ENCODE measurements at regions of chr5 and their contacts with region 1.

Region 1: DNA sequence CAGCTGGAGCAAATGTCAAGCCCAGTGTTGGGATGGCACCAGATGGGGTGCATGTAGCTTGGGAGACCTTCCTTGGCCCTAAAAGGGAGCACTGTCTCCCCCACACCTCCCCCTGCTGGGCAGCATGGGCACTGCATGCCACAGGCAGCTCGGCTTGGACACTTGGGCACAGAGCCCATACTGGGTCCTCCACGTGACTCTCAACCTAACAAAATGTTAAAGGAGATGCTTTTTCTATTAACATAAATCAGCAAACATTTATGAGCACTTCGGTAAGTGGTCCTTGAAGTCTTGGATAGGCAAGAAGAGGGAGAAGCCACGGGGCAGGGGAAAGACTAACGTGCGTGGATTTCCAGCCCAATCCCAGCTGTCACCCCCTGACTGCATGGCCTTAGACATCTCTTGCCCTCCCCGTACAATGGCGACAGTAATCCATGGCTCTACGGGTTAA is 23.9 kb upstream of the MAPK9 start:
- DNase-seq: peak; percentile 81
- ATAC-seq: peak; percentile 30
- H3K4me3 Mint-ChIP-seq: no peak overlapping the region
- H3K27ac Mint-ChIP-seq: no peak overlapping the region
- H3K4me1 Mint-ChIP-seq: peaks cover 3% of the 10 kb centered on the region
- H3K27me3 Mint-ChIP-seq: no peaks in the 10 kb centered on the region

Region 2: DNA sequence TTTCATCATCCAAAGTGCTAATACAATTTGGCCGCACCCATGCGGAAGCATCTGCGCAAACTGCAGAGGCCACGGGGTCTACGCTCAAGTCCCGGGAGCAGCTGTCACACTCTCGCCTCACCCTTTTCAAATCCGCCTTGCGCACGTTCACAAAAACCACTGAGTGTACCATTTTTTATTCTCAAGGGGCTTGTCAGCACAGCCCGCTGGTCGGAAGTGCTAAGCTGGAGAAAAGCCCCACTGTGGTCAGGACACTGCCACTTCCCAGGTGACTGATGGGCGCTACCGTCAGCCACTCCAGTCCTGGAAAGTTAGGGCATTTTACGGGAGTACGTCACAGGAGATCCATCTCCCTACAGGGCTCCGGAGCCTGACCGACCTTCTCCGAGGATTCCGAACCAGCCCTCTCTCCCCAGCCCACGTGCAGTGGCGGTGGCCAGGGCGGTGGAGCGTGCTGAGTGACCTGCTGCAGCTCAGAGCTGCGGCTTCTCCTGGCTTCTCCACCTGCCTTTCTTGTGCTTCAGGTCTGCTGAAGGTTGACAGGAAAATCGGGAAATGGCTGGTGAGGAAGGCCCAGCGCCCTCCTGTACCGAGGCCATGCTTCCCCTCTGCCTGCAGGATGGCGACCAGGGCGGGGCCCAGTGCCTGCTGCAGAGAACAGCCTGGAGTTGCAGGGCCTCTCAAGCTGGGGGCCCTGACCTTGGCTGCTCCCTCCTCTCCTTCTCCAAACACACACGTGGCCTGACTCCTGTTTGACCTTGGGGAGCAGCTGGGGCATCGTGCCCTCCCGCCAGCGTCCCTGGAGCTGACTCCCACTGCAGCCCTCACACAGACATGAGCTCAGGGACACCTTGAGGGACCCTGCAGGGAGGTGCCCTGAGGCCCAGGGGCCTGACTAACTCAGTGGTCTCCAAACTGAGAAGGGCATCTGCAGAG is 121.1 kb before region 1 on chr5:
- POLR2A ChIA-PET with region 1: no interaction called
- DNase-seq: no peak
- ATAC-seq: no peak
- H3K4me3 Mint-ChIP-seq: no peak overlapping the region
- H3K27ac Mint-ChIP-seq: no peak overlapping the region
- H3K4me1 Mint-ChIP-seq: no peaks in the 10 kb centered on the region
- H3K27me3 Mint-ChIP-seq: no peaks in the 10 kb centered on the region

Region 3: GRCh38 chr5:180291943-180292831 is 23.6 kb before region 1 on chr5 and contains the start of gene MAPK9:
- POLR2A ChIA-PET with region 1: interaction called, 10 read pairs
- DNase-seq: peak; percentile 91
- ATAC-seq: peak; percentile 79
- H3K4me3 Mint-ChIP-seq: peak within 1 kb of the TSS; percentile 94
- H3K27ac Mint-ChIP-seq: peak within 1 kb of the TSS; percentile 98
- H3K4me1 Mint-ChIP-seq: peaks cover 36% of the 10 kb centered on the region
- H3K27me3 Mint-ChIP-seq: no peaks in the 10 kb centered on the region
- total RNA-seq, gene MAPK9: 45.0 to 46.0 TPM

Region 4: GRCh38 chr5:180343831-180344327 is 28.1 kb after region 1 on chr5:
- POLR2A ChIA-PET with region 1: no interaction called
- DNase-seq: no peak
- ATAC-seq: no peak
- H3K4me3 Mint-ChIP-seq: no peak overlapping the region
- H3K27ac Mint-ChIP-seq: no peak overlapping the region
- H3K4me1 Mint-ChIP-seq: no peaks in the 10 kb centered on the region
- H3K27me3 Mint-ChIP-seq: peaks cover 14% of the 10 kb centered on the region

Measured in activated naive CD8-positive, alpha-beta T cell treated with anti-CD3 and anti-CD28 coated beads, Interleukin-2, amount 10 ng/mL, durations not matched to agents 7 days and 5 days (primary cell).